ENCODE measurements at regions of chr10 and their contacts with region 1.

Region 1: GRCh38 chr10:63166742-63167258 is 33.7 kb downstream of the NRBF2 start:
- DNase-seq: peak in 7 of 9 donors; percentile 36 to 65 (median 55)
- ATAC-seq: peak; percentile 79
- H3K4me3 ChIP-seq: no peak overlapping the region
- H3K4me3 Mint-ChIP-seq: no peak overlapping the region
- H3K27ac ChIP-seq: no peak overlapping the region
- H3K27ac Mint-ChIP-seq: peak overlapping the region in 6 of 9 donors; percentile 24 to 59 (median 46)
- H3K4me1 ChIP-seq: no peaks in the 10 kb centered on the region
- H3K4me1 Mint-ChIP-seq: peaks cover under 1 to 42% (median 2%) of the 10 kb centered on the region in 7 donors
- H3K27me3 ChIP-seq: no peaks in the 10 kb centered on the region
- H3K27me3 Mint-ChIP-seq: no peaks in the 10 kb centered on the region

Region 2: DNA sequence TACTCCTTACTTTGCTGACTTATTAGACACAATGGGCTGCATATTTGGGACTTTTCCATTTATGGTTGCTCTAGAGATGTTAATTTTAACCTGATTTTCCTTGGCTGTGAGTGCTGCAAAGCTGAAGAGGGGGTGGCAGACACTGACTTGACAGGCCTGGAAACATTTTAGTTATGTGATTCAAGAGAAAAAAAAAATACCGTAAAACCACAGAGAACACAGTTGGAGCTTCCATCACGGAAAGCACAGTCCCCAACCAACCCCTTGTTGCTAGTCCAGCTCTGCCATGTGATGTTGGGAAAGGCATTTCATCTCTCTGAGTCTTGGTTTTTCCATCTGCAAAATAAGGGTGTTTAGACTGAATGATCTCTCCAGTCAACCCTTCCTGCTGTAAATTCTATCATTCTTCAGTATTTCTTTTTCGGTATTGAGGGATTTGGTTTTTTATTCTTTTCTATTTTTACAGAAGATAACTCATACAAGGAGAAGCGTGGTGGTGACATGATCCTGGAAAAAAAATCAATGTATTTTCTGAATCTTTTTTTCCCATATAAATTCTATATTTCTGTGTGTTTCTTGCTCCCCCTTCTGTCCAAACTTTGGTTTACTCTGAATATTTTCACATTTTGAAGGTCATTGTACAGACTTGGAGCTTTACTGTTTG is 600.5 kb after region 1 on chr10:
- CTCF ChIA-PET with region 1: no interaction called
- POLR2A ChIA-PET with region 1: no interaction called
- intact Hi-C with region 1: loop called in 1 of 2 experiments (anchors 2 kb)
- DNase-seq: no peak
- ATAC-seq: no peak
- H3K4me3 ChIP-seq: no peak overlapping the region
- H3K4me3 Mint-ChIP-seq: no peak overlapping the region
- H3K27ac ChIP-seq: no peak overlapping the region
- H3K27ac Mint-ChIP-seq: no peak overlapping the region
- H3K4me1 ChIP-seq: no peaks in the 10 kb centered on the region
- H3K4me1 Mint-ChIP-seq: no peaks in the 10 kb centered on the region
- H3K27me3 ChIP-seq: no peaks in the 10 kb centered on the region
- H3K27me3 Mint-ChIP-seq: peaks cover 0 to 19% (median 0%) of the 10 kb centered on the region in 5 donors

Measured in naive thymus-derived CD4-positive, alpha-beta T cell (primary cell).